Left colon (tissue), 2 donors: ENCODE measurements at regions of chr6 and their contacts with region 1.

Region 1: DNA sequence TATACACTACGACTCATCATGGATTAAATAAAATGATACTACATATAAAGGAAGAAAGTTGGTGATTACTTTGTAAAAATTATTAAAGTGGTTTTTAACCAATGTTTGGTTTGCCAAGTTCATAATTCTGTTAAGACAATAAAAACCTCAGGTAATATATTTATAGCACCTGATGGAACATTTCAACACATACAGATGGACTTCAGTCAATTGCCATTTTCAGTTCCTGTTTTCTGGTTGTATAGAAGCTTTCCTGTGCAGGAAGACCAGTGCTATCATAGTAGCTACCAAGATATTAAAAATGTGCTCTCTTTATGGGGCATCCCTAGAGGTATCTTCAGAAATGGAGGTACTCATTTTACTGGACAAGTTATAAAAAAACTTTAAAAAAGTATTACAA is 1686.4 kb downstream of the GRIK2 start:
- DNase-seq: no peak
- ATAC-seq: no peak

Region 2: DNA sequence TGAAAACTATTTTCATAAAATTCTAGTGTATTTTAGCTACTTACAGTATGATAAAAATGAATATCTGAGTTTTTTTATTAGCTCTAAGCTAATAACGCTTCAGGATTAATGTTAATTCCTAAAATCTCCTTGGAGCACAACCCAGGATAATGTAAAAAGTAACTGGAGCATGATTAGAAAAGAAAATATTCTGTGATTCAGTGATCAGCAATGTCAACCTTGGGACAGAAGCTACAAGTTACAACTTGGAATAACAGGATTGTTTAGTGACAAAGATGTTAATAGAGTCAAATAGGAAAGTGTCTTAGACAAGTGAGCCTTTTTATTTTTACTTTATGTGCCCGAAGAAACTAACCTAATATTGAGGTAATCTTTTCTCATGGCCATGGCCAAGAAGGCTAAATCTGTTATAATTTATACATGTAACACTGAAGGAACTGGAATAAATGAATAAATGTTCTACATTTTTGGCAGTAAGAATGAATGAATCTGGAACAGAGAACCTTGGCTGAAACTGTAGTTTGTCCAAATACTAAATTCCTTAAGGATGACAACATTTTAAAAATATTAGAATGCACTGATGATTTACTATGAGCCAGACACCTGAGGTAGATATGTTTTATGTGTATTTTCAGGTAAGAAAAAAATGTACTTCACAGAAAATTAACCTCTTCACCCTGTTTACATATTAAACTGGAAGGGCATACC is 692.4 kb before region 1 on chr6:
- intact Hi-C with region 1: no loop called
- DNase-seq: no peak
- ATAC-seq: no peak

Region 3: GRCh38 chr6:103153016-103153415 is 73.1 kb after region 1 on chr6:
- intact Hi-C with region 1: no loop called
- DNase-seq: no peak
- ATAC-seq: no peak

Region 4: DNA sequence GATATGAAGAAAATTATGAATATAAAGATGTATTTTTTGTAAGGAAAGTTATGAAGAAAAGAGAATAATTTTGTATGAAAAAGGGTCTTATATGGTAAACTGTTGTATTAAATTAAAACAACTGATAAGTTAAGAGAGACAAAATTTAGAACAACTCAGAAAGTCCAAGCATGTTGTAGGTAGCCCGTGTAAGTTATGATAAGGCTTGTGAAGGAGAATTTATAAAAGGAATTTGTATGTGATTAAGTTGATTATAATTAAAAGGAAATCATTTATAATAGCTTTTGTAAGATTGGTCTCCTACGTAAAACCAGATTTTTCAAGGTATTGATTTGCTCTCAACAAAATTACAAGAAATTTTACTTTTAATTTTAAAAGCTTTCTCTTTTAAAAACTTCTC is 200.6 kb after region 1 on chr6:
- intact Hi-C with region 1: loop called in 1 of 2 experiments (anchors 10 kb)
- DNase-seq: no peak
- ATAC-seq: no peak